ENCODE measurements at regions of chr19 and their contacts with region 1.

Region 1: DNA sequence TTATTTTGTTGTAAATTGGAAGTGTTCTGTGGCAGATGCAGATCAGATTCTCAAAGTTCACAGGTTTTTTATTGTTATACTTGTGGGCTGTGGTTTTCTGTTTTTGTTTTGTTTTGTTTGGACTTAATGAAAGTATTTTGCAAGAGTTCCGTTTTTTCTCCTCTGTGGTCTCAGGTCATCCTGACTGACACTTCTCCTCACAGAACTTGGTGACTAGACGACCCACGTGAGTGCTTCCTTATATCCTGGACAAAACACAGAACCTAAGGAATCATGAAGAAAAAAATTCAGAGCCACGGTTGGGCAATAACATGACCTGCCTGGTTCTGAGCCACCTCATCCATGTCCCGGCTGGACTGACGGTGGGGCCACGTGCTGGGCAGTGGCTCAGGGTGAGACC is 2.5 kb upstream of the RFPL4AL1 start:
- DNase-seq: peak; percentile 3
- H3K4me3 ChIP-seq: no peak overlapping the region
- H3K27ac ChIP-seq: no peak overlapping the region
- H3K4me1 ChIP-seq: no peaks in the 10 kb centered on the region
- H3K27me3 ChIP-seq: peaks cover 0 to 2% (median 0%) of the 10 kb centered on the region in 4 donors
- CTCF ChIP-seq: no peak
- EP300 ChIP-seq: no peak
- POLR2A ChIP-seq: no peak

Region 2: DNA sequence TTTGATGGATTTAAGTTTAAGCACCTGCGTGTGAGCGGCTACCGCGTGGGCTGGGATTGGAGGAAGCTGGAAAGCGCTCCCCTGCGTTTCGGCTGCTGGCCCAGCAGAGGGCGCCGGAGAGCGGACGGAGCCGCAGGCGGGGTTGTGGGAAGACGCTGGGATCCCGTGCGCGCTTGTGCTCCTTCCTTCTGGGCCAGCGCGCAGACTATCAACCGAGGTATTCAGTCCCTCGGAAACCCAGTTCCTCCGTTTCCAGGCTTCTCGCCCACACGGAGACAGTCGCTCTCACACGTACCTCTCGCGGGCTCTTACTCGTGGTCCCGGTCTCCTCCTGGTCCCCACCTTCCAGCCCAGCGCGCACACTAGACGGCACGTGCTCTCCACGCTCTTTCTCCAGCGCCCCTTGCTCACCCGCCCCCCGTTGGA is 62.7 kb before region 1 on chr19:
- intact Hi-C with region 1: no loop called
- DNase-seq: no peak
- H3K4me3 ChIP-seq: no peak overlapping the region
- H3K27ac ChIP-seq: no peak overlapping the region
- H3K4me1 ChIP-seq: peaks cover 0 to 8% (median 2%) of the 10 kb centered on the region in 4 donors
- H3K27me3 ChIP-seq: no peaks in the 10 kb centered on the region
- CTCF ChIP-seq: peak; percentile 59 to 95 (median 72)
- EP300 ChIP-seq: no peak
- POLR2A ChIP-seq: no peak

Region 3: DNA sequence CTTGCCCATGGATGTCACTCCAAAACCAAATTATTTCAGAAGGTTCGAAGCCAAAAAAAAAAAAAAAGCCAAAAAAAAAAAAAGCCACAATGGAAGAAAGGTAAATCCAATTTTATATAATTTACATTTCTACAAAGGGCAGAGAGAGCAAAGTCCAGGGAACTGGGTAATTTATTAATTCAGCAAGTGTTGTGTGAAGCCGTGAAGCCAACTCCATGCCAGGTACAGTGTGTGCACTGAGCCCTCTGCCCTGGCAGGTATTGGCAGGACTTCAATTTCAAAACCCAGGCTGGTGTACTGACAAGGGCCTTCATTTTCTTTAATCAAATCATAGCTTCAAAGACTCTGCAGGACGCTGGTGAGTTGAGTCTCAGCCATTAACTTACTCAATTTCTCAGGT is 13.1 kb before region 1 on chr19:
- intact Hi-C with region 1: loop called (anchors 1 kb)
- DNase-seq: no peak
- H3K4me3 ChIP-seq: no peak overlapping the region
- H3K27ac ChIP-seq: no peak overlapping the region
- H3K4me1 ChIP-seq: no peaks in the 10 kb centered on the region
- H3K27me3 ChIP-seq: peaks cover 0 to 12% (median 0%) of the 10 kb centered on the region in 4 donors
- CTCF ChIP-seq: no peak
- EP300 ChIP-seq: no peak
- POLR2A ChIP-seq: no peak

Measured in esophagus muscularis mucosa (tissue), 4 donors.